ENCODE measurements at regions of chr1 and their contacts with region 1.

Region 1: DNA sequence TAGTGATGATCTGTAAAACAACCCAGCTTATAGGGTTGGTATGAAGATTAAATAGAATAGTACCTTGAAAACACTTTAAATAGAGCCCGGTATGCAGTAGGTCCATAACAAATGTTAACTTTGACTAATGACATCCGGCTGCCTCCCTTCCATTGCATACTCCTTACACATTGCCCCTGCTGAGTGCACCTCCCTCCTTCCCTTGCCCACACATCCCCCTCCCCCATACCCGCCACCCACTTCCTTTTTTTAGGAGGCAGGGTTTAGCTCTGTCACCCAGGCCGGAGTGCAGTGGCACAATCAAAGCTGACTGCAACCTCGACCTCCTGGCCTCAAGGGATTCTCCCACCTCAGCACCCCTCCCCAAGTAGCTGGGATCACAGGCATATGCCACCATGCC is 24.4 kb upstream of the ZC3H12A start:
- DNase-seq: no peak

Region 2: DNA sequence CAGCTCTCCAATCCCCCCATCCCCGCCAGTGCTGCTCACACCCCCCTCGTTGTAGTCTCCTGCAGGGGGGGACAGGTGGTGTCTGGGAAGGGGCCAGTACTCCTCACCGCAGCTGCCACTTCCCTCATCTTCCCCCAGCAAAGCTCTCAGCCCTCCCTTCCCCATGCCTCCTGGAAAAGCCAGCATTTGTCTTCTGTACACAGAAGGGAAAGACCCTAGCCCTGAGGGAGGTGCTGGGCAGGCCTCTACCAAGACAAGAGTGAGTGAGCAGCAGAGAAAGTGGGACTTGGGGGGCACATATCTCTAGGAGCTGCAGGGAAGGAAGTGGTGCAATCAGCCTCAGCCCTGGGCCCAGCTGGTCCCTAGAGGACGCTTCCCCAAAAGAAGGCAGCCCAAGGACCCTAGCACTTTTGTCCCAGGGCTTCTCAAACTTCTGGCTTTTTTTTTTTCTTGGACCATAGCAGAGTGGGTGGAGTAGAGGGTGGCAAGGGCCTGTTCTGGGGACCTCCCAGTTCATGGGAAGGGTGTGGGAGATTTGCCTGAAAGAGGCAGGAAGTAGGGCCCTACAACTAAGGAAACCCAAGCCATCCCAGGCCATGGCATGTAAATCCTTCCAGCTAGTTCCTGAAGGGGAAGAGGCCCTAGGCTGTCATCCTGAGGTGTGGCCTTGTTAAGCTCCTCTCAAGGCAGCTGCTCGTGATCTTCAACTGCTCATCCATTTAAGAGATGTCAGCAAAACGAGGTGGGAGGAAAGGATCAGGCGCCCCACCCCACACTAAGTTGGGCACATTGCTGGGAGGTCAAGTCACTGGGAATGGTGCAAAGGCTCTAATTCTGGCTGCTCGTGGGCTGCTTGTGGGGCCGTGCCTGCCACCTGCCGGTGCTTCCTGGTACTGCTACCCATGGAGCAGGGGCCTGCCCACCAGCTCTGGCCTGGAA is 37.0 kb after region 1 on chr1:
- intact Hi-C with region 1: loop called (anchors 2 to 5 kb)
- DNase-seq: peak; percentile 96

Region 3: DNA sequence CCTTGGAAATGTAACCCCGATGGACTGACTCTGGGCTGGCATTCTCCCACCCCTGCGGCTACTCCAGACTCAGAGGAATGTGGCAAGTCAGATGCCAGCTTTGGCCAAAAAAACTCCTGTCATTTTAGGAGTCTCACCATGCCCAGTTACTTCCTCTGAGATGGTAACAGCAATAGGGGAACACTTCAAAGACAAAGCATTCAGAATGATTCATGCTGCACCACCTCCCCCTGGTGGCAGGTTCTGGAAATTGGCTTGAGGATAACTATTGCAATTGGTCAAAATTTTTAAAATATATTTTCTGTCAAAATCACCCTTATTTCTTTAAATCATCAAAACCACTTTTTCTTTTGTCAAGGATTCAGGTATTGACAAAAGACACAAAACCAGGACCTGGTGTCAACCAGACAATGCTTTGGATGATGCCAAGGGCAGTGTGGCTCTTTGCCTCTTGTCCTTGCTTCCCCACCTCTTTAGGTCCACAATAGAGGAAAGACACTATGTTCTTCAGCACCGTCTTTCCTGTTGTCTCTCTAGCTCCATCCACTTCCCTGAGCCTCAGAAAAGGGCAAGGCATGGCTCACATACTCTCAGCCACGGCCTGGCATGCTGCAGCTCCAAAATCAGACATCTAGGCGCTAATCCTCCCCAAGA is 232.5 kb after region 1 on chr1:
- intact Hi-C with region 1: loop called (anchors 5 to 10 kb)
- DNase-seq: peak; percentile 87

Measured in posterior vena cava (tissue), 2 donors.